GM12878 (cell line): ENCODE measurements at regions of chrX and their contacts with region 1.

Region 1: DNA sequence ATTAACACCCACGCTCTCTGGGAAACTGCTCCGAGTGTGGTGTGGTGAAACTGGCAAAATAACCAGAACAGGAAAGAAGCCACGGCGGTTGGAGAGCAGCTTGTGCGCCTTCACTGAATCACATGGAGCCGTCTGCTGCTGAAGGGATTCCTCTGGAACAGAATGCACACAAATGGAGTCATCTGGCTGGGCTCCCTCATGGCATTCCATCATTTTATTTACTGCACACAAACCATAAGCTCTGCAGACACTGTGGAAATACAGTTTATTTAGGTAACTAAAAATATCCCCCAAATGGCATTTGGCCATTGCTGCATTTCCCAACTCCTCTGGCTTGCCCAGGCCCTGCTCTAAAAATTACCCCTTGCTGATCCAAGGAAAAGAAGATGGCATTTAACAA is 187.0 kb upstream of the S100G start:
- DNase-seq: no peak
- ATAC-seq: no peak
- H3K4me3 ChIP-seq: no peak overlapping the region
- H3K27ac ChIP-seq: no peak overlapping the region
- H3K4me1 ChIP-seq: no peaks in the 10 kb centered on the region
- H3K27me3 ChIP-seq: peaks cover 0 to 5% of the 10 kb centered on the region in 2 experiments; a peak in 2 of 4 replicates
- CTCF ChIP-seq: no peak
- EP300 ChIP-seq: no peak
- POLR2A ChIP-seq: no peak
- RAD21 ChIP-seq: no peak

Region 2: DNA sequence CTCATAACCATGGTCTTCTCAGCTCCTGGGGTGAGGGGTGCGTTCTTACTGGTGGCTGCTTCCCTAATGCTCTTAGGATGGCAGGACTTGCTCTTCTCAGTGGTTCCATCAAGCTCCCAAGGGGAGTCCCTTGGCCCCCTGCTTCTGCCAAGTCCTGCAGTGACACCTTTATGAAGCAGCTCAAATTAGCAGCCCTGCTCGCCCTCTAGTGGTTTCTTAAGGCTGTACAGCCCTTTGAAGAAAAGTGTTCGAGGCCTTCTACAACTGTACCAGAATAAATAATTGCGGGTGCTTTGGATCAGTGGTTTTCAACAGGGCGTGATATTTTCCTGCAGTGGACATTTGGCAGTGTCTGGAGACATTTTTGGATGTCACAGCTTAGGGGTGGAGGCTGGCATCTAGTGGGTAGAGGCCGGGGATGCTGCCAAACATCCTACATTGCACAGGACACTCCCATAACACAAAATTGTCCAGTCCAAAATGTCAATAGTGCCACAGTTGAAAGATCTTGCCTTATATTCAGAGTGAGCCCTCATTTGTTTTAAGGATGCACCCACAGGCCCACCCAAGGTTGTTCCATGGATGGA is 17.7 kb before region 1 on chrX:
- CTCF ChIA-PET with region 1: interaction called, 11 read pairs
- POLR2A ChIA-PET with region 1: no interaction called
- RAD21 ChIA-PET with region 1: no interaction called
- SMC1A ChIA-PET with region 1: no interaction called
- in situ Hi-C with region 1: no loop called
- intact Hi-C with region 1: no loop called
- DNase-seq: no peak
- ATAC-seq: peak; percentile 96
- H3K4me3 ChIP-seq: no peak overlapping the region
- H3K27ac ChIP-seq: no peak overlapping the region
- H3K4me1 ChIP-seq: no peaks in the 10 kb centered on the region
- H3K27me3 ChIP-seq: no peaks in the 10 kb centered on the region; a peak in 2 of 4 replicates
- CTCF ChIP-seq: peak; percentile 73 to 89 (median 74)
- EP300 ChIP-seq: no peak
- POLR2A ChIP-seq: no peak
- RAD21 ChIP-seq: peak; percentile 72

Region 3: DNA sequence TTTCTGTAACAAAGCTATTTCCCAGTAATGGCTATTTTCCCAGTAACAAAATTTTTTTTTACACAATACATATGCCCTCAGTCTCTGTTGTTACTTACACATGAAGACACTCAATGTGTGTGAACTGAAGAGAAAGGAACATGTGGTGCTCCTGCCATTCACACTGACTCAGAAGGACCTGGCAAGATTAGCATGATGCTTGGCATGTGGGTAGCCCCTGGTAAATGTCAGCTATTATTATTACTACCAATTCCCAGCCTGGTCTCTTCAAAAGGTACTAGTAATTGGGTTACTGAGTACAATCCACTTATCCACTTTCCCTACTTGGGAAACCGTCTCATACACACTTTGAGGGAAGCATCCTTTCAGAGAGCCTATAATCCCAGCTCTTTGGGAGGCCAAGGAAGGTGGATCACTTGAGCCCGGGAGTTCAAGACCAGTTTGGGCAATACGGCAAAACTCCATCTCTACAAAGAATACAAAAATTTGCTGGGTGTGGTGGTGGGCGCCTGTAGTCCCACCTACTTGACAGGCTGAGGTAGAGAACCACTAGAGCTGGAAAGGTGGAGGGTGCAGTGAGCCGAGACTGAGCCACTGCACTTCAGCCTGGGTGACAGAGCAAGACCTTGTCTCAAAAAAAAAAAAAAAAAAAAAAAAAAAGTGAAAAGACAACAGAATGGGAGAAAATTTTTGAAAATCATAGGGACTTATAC is 392.6 kb after region 1 on chrX:
- CTCF ChIA-PET with region 1: no interaction called
- POLR2A ChIA-PET with region 1: no interaction called
- RAD21 ChIA-PET with region 1: no interaction called
- SMC1A ChIA-PET with region 1: no interaction called
- in situ Hi-C with region 1: no loop called
- intact Hi-C with region 1: no loop called
- DNase-seq: no peak
- ATAC-seq: peak; percentile 47
- H3K4me3 ChIP-seq: no peak overlapping the region
- H3K27ac ChIP-seq: no peak overlapping the region
- H3K4me1 ChIP-seq: no peaks in the 10 kb centered on the region
- H3K27me3 ChIP-seq: no peaks in the 10 kb centered on the region
- CTCF ChIP-seq: no peak
- EP300 ChIP-seq: no peak
- POLR2A ChIP-seq: no peak
- RAD21 ChIP-seq: no peak